Testis (tissue), 5 donors: ENCODE measurements at regions of chr2 and their contacts with region 1.

Region 1: DNA sequence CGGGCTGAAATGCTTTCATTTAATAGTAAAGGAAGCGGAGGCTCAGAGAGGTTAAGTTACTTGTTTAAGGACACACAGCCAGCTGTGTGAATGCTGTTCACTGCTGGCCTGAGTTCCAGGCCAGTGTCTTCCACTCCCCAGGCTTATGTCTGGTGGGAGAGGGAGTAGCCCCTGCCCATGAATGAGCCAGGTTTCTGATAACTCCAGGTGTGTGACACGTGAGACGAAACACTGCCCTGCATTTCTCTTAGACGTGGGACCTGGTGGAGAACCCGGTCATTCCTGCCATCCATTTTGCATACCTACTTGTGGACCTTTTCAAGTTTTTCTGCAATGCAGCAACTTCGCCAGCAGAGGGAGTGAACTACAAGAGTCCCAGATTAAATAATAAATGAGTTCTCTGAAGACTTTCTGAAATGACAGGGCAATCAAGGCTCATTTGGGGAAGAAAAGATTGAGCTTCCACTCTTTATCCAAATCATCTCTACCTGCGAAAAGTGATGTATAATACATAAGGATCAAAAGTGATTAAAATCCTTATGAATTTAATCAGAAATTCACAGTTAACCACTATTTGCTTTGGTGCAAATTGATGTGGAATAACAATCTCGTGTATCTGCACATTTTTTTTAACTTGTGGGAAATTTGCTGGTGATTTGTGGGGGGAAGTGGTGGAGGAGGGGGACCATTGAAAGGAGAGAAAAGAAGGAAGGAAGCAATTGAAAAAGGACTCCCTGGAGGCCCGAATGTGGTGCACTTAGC is 79.4 kb upstream of the ASB18 start:
- DNase-seq: peak; percentile 81
- H3K4me3 ChIP-seq: no peak overlapping the region
- H3K27ac ChIP-seq: no peak overlapping the region
- H3K4me1 ChIP-seq: peaks cover 5% of the 10 kb centered on the region
- H3K27me3 ChIP-seq: no peaks in the 10 kb centered on the region
- CTCF ChIP-seq: peak; percentile 60 to 81 (median 79)
- POLR2A ChIP-seq: no peak

Region 2: DNA sequence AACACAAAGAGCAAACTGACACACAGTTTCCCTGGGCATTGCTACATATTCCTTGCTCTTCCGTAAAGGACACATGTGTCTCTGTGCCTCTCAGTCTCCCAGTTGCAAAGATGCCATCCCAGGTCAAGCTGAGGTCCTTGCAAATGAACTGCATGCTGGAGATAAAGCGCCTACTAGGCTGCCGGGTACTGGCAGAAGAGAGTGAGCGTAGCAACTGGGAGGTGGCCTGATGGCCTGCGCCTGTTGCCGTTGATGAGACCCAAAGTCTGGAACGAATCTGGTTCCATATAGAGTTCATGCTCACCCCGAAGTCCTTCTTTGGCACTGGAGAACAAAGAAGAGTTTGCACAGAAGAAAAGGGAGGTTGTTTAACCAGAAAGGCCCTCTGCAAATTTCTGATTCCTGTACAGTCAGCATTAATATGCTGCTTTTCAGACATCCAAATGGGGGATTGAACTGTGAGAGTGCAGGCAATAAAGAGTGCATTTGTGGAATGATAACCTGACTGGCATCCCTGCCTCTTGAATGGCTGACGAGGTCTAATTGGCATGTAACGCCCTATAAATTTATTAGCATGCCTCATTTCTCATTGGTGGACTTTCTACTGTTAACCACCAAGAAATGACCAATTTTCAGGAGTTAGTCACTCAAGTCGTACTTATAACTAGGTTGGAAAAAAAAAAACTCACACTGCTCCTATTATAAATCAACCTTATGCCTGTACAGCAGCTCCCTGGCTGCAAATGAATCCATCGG is 254.1 kb before region 1 on chr2:
- intact Hi-C with region 1: no loop called
- DNase-seq: no peak
- H3K4me3 ChIP-seq: no peak overlapping the region
- H3K27ac ChIP-seq: no peak overlapping the region
- H3K4me1 ChIP-seq: no peaks in the 10 kb centered on the region
- H3K27me3 ChIP-seq: no peaks in the 10 kb centered on the region
- CTCF ChIP-seq: no peak
- POLR2A ChIP-seq: no peak

Region 3: GRCh38 chr2:236637686-236638569 is 294.3 kb after region 1 on chr2:
- intact Hi-C with region 1: no loop called
- DNase-seq: peak; percentile 6
- H3K4me3 ChIP-seq: no peak overlapping the region
- H3K27ac ChIP-seq: no peak overlapping the region
- H3K4me1 ChIP-seq: no peaks in the 10 kb centered on the region
- H3K27me3 ChIP-seq: no peaks in the 10 kb centered on the region
- CTCF ChIP-seq: no peak
- POLR2A ChIP-seq: no peak

Region 4: DNA sequence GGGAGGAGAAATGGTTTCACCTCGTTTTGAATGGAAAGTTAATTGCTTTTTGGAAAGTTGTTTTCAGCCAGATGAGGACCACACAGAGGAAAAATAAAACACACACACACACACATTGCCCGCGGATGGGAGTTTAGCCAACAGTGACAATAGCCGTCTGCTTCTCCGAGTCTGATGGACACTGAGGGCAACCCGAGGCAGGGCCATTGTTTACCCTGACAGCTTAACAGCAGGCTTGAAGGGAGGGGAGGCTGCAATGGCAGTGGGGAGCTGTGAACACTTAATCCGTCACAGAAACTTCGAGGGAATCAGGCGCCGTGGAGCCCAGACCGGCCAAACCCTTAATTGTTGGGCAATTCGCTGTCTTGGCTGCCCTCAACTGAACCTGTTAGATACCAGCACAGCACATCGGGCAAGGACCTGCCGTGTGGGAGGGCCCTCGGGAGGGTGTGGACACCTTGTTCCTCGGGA is 371.9 kb after region 1 on chr2:
- intact Hi-C with region 1: no loop called
- DNase-seq: no peak
- H3K4me3 ChIP-seq: no peak overlapping the region
- H3K27ac ChIP-seq: no peak overlapping the region
- H3K4me1 ChIP-seq: no peaks in the 10 kb centered on the region
- H3K27me3 ChIP-seq: no peaks in the 10 kb centered on the region
- CTCF ChIP-seq: no peak
- POLR2A ChIP-seq: no peak

Region 5: DNA sequence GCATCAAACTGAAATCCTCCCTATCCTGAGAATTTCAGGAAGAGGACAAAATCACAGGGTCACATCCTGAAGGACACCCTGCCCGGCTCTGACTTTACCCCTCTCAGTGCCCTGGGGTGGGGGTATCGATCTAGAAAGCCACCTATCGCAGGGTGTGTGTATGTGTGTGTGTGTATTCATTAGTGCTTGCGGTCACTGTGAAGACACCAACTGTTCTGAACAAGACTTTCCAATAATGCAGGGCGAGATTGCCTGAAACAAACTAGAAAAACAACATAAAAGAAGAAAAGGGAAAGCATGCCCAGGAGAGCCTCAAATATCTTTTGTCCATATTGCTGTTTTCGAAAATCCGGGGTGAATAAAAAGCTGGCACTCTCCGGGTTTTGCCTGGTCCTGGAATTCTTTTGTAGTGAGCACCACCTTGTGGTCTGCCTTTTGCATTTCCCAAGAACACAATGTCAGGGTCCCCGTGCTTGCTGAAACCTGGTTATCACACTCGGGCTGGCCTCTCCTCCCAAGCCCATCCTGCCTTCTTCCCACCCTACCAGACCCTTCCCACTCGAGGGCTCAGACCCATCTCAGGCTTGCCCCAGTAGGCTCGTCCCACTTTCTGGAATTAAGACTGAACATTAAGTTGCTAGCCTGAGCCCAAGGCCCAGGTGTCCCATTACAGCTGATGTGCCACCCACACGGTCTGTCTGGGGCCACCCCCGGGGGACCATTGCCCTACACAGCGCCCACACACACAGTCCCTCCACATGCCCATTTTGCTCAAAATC is 717.1 kb after region 1 on chr2:
- intact Hi-C with region 1: loop called (anchors 10 kb)
- DNase-seq: peak; percentile 70
- H3K4me3 ChIP-seq: no peak overlapping the region
- H3K27ac ChIP-seq: no peak overlapping the region
- H3K4me1 ChIP-seq: peaks cover 3% of the 10 kb centered on the region
- H3K27me3 ChIP-seq: no peaks in the 10 kb centered on the region
- CTCF ChIP-seq: peak; percentile 29 to 73 (median 56)
- POLR2A ChIP-seq: no peak